Motor neuron (in vitro differentiated cells): ENCODE measurements at regions of chr19 and their contacts with region 1.

Region 1: GRCh38 chr19:38335949-38336637 is 463 bp downstream of the CATSPERG start:
- ATAC-seq: peak; percentile 74 to 81 (median 76)
- H3K4me3 ChIP-seq: peak overlapping the region; percentile 47 to 71 (median 51)
- H3K27ac ChIP-seq: peak overlapping the region; percentile 78 to 87
- H3K4me1 ChIP-seq: peaks cover 13 to 14% of the 10 kb centered on the region in 2 donors

Region 2: GRCh38 chr19:38142176-38143035 is 193.7 kb before region 1 on chr19:
- in situ Hi-C with region 1: loop called in 2 of 9 experiments (anchors 25 kb)
- ATAC-seq: peak; percentile 31 to 97 (median 95)
- H3K4me3 ChIP-seq: no peak overlapping the region
- H3K27ac ChIP-seq: peak overlapping the region in 1 of 2 donors; percentile 18
- H3K4me1 ChIP-seq: peaks cover 3 to 10% of the 10 kb centered on the region in 2 donors

Region 3: DNA sequence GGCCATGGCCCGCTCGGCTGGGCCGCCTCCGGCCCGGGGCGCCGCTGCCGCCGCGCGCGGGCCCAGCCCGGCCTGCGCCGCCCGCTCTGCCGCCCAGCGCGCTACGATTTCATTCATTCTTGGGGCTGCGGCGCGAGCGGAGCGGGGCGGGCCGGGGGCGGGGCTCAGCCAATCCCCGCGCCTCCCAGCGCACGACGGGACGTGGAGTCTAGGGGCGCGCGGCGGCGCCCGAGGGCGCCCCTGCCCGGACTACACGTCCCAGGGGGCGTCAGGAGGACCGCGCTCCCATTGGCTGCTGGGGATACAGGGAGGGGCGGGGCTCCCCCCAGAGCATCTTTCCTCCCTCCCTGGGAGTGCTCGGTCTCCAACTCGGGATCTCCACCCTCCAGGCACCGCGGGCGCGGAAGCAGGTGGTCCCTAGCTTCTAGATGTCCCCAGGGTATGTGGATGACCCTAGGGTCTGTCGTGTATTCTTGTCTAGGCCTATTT is 106.5 kb before region 1 on chr19:
- in situ Hi-C with region 1: loop called in 8 of 9 experiments (anchors 10 to 25 kb)
- ATAC-seq: peak; percentile 79 to 96 (median 88)
- H3K4me3 ChIP-seq: peak overlapping the region; percentile 50 to 81 (median 54)
- H3K27ac ChIP-seq: peak overlapping the region; percentile 72 to 95
- H3K4me1 ChIP-seq: peaks cover 20 to 25% of the 10 kb centered on the region in 2 donors

Region 4: DNA sequence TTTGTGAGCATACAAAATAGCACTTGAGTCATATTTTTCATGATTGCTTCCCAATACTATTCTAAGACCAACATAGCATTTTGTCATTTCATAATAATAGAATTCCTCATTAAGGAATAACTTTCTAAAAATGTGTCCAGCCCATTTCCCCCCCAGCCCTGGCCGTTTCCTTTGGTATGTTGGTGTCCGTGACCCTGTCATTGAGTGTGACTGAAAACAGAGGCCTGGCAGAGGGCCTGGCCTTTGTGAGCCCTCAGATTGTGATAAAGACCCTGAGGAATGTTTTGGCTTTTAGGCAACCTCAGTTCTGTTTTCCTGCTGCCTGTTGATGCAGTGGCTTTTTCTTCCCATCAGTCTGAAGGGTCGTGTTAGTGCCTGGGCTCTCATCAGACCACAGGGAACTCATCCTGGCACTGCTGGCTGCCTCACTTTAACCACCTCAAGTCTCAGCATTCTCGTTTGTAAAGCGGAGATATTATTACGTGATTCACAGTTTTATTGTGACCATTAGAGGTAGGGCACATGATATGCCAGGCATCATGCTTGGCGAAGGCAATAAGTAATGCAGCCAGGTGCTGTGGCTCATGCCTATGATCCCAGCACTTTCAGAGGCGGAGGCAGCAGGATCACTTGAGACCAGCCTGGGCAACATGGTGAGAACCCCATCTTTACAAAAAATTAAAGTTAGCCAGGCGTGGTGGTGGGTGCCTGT is 58.0 kb before region 1 on chr19:
- in situ Hi-C with region 1: no loop called
- ATAC-seq: no peak
- H3K4me3 ChIP-seq: no peak overlapping the region
- H3K27ac ChIP-seq: no peak overlapping the region
- H3K4me1 ChIP-seq: peaks cover 0 to 8% of the 10 kb centered on the region in 2 donors

Region 5: GRCh38 chr19:38478273-38478967 is 142.3 kb after region 1 on chr19:
- in situ Hi-C with region 1: no loop called
- ATAC-seq: peak in 3 of 8 experiments; percentile 38 to 86 (median 49)
- H3K4me3 ChIP-seq: no peak overlapping the region
- H3K27ac ChIP-seq: no peak overlapping the region
- H3K4me1 ChIP-seq: no peaks in the 10 kb centered on the region

Region 6: DNA sequence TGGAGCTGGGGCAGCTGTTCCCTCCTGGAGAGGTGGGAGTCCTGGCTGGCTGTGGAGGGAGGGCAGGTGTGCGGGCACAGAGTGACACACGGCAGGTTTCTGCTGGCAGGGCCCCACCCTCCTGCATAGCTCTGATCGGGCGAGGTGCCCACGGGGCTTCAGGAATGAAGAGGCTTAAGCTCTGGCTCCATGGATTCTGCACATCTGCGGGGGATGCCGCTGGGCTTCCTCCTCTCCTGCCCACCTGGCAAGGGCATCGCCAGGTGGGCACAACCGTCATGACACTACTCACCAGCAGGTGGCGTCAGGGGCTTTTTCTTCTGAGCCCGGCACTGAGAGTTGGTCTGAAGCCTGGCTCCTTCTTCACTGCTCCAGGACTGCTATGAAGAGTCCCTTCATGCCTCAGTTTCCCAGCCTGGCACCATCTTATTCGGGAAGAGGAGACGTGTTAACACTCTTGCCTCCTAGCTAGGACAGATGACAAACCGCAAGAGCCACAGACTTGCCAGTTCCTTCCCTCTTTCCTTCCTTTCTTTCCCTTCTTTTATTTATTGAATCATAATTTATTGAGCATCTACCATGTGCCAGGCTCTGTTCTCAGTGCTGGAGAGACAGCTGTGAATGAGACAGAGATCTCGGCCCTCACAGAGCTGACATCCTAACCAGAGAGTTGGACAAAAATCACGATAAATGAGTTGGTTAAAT is 774.3 kb after region 1 on chr19:
- in situ Hi-C with region 1: no loop called
- ATAC-seq: peak; percentile 61 to 86 (median 70)
- H3K4me3 ChIP-seq: no peak overlapping the region
- H3K27ac ChIP-seq: no peak overlapping the region
- H3K4me1 ChIP-seq: no peaks in the 10 kb centered on the region